Motor neuron (in vitro differentiated cells): ENCODE measurements at regions of chr14 and their contacts with region 1.

Region 1: GRCh38 chr14:99518441-99519346 is 37.5 kb downstream of the CCNK start:
- ATAC-seq: peak; percentile 9 to 75 (median 26)
- H3K4me3 ChIP-seq: no peak overlapping the region
- H3K27ac ChIP-seq: no peak overlapping the region
- H3K4me1 ChIP-seq: peaks cover 22 to 27% of the 10 kb centered on the region in 2 donors

Region 2: DNA sequence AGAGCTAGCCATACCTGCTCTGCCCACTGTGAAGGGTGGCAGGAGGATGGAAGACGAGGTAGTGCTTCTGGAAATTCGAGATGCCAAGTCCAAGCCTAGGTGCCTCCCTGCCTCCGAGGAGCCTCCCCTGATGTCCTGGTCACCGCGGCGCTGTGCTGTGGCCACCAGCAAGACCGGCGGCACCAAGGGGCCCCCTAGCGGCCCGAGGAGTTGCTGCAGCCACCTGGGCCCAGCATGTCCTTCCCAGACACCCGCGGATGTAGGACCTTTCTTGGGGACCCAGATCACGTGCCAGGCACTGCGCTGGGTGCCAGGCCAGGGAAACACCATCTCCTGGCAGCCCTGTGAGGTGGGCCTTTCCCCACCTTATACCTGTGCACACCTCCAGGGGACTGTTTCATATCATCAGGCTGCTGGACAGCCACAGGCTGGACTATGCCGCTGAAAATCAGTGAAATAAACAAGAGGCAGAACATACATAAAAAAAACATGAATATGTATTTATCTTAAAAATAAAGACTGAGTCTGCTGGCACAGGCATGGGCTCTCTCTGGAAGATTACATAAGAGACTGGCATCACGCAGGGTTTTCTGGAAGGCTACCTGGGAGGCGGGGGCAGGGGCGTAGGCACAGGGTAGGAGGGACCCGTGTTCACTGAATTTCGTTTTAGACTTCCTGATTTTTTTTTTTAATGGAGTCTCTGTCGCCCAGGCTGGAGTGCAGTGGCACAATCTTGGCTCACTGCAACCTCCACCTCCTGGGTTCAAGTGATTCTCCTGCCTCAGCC is 110.3 kb after region 1 on chr14:
- in situ Hi-C with region 1: loop called in 5 of 9 experiments (anchors 10 to 25 kb)
- ATAC-seq: peak; percentile 88 to 98 (median 94)
- H3K4me3 ChIP-seq: no peak overlapping the region
- H3K27ac ChIP-seq: no peak overlapping the region
- H3K4me1 ChIP-seq: peaks cover 16 to 23% of the 10 kb centered on the region in 2 donors

Region 3: DNA sequence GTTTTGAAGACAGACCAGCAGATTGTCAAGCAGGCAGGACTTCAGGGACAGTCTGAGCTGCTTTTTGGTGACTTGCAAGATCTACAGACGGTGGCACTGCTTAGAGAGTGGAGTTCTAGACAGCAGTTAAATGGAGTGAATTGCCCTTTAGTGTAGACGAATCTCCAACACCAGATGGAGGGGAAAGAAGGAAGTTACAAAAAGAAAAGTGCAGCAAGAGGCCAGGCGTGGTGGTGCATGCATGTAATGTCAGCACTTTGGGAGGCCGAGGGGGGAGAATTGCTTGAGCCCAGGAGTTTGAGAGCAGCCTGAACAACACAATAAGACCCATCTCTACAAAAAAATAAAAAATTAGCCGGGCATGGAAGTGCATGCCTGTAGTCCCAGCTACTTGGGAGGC is 117.8 kb after region 1 on chr14:
- in situ Hi-C with region 1: loop called in 5 of 9 experiments (anchors 10 to 25 kb)
- ATAC-seq: no peak
- H3K4me3 ChIP-seq: no peak overlapping the region
- H3K27ac ChIP-seq: no peak overlapping the region
- H3K4me1 ChIP-seq: peaks cover 3 to 11% of the 10 kb centered on the region in 2 donors

Region 4: DNA sequence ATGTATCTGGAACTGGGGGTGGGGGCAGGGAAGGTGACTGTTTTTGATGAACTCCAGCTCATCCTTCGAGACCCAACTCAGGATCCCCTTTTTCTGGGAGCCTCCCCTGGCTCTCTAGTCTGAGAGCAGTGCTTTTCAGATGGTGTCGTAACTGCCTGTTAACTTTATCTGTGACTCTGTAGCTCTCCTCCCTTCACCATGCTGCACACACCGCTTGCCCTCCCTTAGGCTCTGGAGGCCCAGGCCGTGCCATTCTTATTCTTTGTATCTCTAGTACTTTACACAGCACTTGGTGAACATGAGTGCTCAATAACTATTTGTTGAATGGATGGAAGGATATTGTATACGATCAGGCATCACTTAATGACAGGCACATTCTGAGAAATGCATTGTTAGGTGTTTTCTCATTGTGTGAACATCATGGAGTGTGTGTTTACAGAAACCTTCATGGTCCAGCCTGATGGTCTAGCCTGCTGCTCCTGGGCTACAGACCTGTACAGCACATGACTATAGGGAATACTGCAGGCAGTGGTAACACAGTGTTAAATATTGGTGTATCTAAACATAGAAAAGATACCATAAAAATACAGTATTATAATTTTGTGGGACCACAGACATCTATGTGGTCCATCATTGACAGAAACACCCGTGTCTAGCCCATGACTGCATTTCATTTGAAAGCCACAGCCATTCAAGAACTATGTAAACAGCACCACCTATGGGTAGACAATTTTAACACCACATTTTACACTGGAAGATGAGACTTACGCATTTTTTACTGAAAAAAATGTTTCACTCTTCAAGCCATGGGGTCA is 366.3 kb after region 1 on chr14:
- in situ Hi-C with region 1: loop called in 3 of 9 experiments (anchors 25 kb)
- ATAC-seq: peak; percentile 68 to 91 (median 76)
- H3K4me3 ChIP-seq: no peak overlapping the region
- H3K27ac ChIP-seq: no peak overlapping the region
- H3K4me1 ChIP-seq: peaks cover 13 to 16% of the 10 kb centered on the region in 2 donors

Region 5: GRCh38 chr14:99899578-99900178 is 381.0 kb after region 1 on chr14:
- in situ Hi-C with region 1: loop called in 4 of 9 experiments (anchors 25 kb)
- ATAC-seq: no peak
- H3K4me3 ChIP-seq: no peak overlapping the region
- H3K27ac ChIP-seq: no peak overlapping the region
- H3K4me1 ChIP-seq: no peaks in the 10 kb centered on the region